Pancreas (tissue), 10 donors: ENCODE measurements at regions of chr2 and their contacts with region 1.

Region 1: DNA sequence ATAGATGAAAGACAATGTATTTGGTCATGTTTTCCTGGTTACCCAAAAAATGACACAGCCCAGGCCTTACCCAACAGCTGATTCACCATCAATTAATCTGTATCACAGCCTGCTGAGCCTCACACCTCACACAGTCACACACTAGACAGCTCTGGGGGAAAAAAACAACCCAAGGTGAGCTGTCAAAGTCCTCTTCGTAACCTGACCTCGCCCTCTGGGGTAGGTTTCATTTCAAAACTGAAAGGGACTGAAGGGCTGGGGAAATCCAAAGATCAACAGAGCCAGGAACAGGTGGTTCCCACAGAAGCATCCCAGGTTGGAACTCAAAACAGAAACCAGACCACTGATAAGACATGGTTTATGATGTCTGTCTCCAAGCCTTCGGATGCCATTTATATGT is 18.2 kb upstream of the PCBP1 start:
- DNase-seq: peak in 1 of 6 donors; percentile 57
- ATAC-seq: peak in 3 of 4 donors; percentile 42 to 76 (median 66)
- H3K4me3 ChIP-seq: no peak overlapping the region
- H3K27ac ChIP-seq: peak overlapping the region in 2 of 4 donors; percentile 74 to 82
- H3K4me1 ChIP-seq: peaks cover 0 to 9% (median 4%) of the 10 kb centered on the region in 3 donors
- H3K27me3 ChIP-seq: no peaks in the 10 kb centered on the region
- CTCF ChIP-seq: no peak

Region 2: DNA sequence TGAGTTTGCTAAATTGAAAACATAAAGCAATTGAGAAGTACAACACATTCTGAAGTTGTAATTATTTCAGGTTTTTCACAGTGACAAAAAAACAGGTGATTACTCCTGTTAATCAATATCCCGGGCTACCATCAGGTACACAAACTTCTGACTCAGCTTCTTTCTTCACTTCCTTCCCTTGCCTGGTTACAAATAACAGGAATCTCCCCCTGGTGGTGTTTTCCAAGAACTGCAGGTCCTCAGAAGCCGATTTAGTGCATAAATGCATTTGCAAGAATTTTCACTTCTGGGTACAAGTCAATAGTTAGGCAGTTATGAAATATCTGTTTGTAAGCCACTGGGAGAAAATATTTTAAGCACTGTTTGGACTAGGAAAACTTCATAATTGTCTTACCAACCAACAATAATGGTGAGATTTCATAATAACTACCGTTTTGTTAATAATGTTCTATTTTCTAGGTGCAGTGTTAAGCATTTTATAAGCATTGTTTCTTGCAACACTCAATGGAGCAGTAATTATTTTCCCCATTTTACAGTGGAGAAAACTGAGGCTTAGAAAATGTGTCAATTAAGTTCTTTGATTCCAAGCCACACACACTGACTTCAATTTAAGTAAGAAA is 252.0 kb before region 1 on chr2:
- intact Hi-C with region 1: no loop called
- DNase-seq: peak in 4 of 6 donors; percentile 62 to 83 (median 66)
- ATAC-seq: peak; percentile 78 to 89 (median 85)
- H3K4me3 ChIP-seq: no peak overlapping the region
- H3K27ac ChIP-seq: peak overlapping the region in 1 of 4 donors; percentile 40
- H3K4me1 ChIP-seq: no peaks in the 10 kb centered on the region
- H3K27me3 ChIP-seq: no peaks in the 10 kb centered on the region
- CTCF ChIP-seq: peak; percentile 77 to 89 (median 84)

Region 3: GRCh38 chr2:69926849-69927515 is 142.1 kb before region 1 on chr2:
- intact Hi-C with region 1: loop called in 2 of 3 experiments (anchors 10 kb)
- DNase-seq: no peak
- ATAC-seq: peak in 1 of 4 donors; percentile 64
- H3K4me3 ChIP-seq: no peak overlapping the region
- H3K27ac ChIP-seq: no peak overlapping the region
- H3K4me1 ChIP-seq: no peaks in the 10 kb centered on the region
- H3K27me3 ChIP-seq: no peaks in the 10 kb centered on the region
- CTCF ChIP-seq: no peak

Region 4: DNA sequence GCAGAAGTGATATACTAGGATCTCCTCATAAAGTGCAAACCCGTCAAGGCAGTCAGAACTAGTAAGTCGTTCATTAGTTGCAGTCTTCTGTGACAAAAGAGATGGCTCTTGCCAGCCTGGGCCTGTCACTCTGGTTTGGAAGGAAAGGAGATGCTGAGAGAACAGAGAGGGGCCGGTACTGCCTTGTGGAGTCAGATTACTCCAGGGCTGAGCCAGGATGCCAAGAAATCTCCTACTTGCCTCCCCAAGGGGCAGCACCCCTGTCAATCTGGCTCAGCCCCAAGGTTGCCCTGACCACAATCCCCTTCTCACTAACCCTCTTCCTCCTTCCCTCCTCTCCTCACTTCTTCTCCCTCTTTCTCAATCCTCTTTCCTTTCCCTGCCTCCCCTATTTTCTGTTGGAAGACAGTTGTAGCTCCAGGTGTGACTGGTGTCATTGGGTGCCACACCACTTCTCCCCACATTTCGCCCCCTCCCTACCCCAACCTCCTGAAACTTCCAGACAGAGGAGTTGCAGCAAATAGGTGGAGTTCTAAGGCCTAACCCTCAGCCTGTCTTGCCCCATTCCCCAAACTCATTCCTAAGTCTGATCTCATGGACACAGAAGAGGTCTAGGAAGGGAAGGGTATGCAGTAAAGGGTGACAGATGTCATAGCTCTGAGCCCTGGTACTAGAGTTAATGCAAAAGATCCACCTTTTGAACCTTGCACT is 44.6 kb before region 1 on chr2:
- intact Hi-C with region 1: no loop called
- DNase-seq: no peak
- ATAC-seq: no peak
- H3K4me3 ChIP-seq: no peak overlapping the region
- H3K27ac ChIP-seq: no peak overlapping the region
- H3K4me1 ChIP-seq: peaks cover 0 to 1% (median 0%) of the 10 kb centered on the region in 3 donors
- H3K27me3 ChIP-seq: no peaks in the 10 kb centered on the region
- CTCF ChIP-seq: no peak

Region 5: DNA sequence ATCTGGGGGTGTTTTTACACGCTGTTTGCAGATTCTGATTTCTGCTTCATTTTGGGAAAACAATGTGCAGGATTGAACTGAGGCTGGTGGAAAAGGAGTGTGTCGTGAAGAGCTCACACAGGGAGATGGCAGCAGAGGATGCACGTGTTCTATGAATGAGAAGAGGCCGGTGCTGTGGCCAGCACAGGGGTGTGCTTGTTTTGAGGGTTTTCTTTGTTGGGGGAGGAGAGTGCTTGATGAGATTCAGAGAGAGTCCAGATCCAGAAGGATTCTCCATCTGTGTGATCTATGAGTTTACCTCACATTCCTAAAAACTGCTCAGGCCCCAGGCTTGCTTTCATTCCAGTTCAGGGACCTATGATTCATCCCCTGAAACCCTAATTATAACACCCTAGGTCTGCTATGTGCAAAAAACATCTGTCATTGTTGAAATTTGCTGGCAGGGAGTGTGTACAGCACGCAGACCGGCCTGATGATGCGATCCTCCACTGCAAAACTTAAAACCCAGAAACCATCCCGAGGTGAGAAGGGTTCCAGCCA is 472.5 kb after region 1 on chr2:
- intact Hi-C with region 1: no loop called
- DNase-seq: no peak
- ATAC-seq: no peak
- H3K4me3 ChIP-seq: no peak overlapping the region
- H3K27ac ChIP-seq: no peak overlapping the region
- H3K4me1 ChIP-seq: no peaks in the 10 kb centered on the region
- H3K27me3 ChIP-seq: no peaks in the 10 kb centered on the region
- CTCF ChIP-seq: no peak